Ovary (tissue), 10 donors: ENCODE measurements at regions of chr15 and their contacts with region 1.

Region 1: DNA sequence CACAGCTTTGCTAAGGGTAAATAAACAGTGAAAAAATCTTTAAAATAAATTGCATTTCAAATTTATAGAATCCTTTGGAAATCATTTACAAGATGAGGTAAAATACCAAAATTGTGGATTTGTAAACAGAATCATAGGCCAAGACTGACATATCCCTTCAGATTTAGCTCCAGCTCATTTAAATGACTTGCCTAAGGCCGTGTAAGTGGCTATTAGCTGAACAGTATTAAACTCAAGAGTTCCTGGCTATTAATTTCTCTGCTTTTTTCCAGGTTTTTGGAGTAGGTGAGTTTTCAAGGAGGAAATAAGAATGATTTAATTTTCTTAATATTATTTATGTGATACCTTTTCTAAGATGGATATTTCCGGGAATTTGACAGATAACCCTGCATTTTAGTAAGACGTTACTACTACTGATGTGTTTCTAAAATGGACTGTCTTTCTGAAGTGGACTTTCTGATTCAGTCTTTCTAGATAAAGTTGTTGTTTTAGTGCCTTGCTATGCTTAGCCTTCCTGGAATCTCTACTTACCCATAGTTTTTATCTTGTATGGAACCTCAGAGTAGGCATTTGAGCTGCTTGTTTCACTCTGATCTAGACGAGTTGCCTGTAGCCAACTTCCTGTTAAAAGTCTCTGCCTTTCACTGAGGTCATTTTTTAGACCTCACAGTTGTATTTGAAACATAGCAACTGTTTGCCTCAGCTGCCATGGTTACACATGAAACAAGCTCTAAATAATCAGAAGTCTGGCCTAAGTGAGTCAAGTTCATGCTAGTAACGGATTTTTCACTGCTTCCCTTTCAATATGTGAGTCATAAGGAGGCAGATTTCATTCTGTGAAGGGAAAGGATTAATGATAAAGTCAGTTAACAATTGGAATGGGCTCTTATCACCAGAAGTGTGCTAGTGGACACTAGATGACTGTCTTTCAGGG is 127.0 kb downstream of the KLHL25 start:
- DNase-seq: peak in 2 of 5 donors; percentile 46 to 76
- H3K4me3 ChIP-seq: no peak overlapping the region
- H3K27ac ChIP-seq: peak overlapping the region in 1 of 2 donors; percentile 80
- H3K4me1 ChIP-seq: peaks cover 8% of the 10 kb centered on the region
- H3K27me3 ChIP-seq: no peaks in the 10 kb centered on the region
- CTCF ChIP-seq: no peak
- EP300 ChIP-seq: no peak
- POLR2A ChIP-seq: no peak

Region 2: DNA sequence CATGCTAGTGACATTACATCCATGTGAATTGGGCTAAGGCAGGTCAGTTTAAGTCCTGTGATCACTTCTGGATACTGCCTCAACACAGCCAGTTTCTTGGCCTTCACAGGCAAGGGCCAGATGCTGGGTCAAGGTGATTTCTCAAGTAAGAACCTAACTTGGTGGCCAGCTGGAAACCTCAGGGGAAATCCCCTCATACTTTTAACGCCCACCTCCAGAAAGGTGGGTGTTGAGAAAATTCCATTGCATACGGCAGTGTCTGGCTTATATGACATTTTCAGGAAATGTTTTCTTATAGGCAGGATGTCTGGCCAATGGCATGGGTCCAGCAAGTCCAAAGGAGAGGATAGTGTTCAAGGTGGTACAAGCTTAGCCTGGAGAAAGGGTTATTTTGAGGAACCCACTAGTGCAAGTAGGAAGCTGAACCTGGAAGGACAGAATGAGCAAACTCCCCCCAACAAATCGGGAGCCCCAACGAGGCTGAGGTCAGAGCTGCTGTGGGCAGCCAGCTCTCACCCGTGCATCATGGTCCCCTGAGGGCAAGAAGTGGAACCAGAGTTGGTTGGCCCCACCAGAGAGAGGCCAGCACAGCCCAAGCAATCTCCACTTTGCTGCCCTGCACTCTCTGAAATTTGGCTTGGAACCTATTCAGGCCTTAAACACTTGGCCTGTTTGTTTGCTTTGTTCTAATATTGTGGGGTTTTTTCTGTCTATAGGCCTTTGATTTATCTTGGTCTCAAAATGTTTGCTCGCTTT is 550.7 kb before region 1 on chr15:
- intact Hi-C with region 1: loop called in 1 of 4 experiments (anchors 5 kb)
- DNase-seq: no peak
- H3K4me3 ChIP-seq: no peak overlapping the region
- H3K27ac ChIP-seq: no peak overlapping the region
- H3K4me1 ChIP-seq: no peaks in the 10 kb centered on the region
- H3K27me3 ChIP-seq: no peaks in the 10 kb centered on the region
- CTCF ChIP-seq: no peak
- EP300 ChIP-seq: no peak
- POLR2A ChIP-seq: no peak

Region 3: GRCh38 chr15:85639752-85640381 is 27.9 kb before region 1 on chr15:
- intact Hi-C with region 1: no loop called
- DNase-seq: no peak
- H3K4me3 ChIP-seq: no peak overlapping the region
- H3K27ac ChIP-seq: no peak overlapping the region
- H3K4me1 ChIP-seq: peaks cover 10% of the 10 kb centered on the region
- H3K27me3 ChIP-seq: no peaks in the 10 kb centered on the region
- CTCF ChIP-seq: no peak
- EP300 ChIP-seq: no peak
- POLR2A ChIP-seq: no peak